HepG2 (cell line): ENCODE measurements at regions of chr1 and their contacts with region 1.

Region 1: DNA sequence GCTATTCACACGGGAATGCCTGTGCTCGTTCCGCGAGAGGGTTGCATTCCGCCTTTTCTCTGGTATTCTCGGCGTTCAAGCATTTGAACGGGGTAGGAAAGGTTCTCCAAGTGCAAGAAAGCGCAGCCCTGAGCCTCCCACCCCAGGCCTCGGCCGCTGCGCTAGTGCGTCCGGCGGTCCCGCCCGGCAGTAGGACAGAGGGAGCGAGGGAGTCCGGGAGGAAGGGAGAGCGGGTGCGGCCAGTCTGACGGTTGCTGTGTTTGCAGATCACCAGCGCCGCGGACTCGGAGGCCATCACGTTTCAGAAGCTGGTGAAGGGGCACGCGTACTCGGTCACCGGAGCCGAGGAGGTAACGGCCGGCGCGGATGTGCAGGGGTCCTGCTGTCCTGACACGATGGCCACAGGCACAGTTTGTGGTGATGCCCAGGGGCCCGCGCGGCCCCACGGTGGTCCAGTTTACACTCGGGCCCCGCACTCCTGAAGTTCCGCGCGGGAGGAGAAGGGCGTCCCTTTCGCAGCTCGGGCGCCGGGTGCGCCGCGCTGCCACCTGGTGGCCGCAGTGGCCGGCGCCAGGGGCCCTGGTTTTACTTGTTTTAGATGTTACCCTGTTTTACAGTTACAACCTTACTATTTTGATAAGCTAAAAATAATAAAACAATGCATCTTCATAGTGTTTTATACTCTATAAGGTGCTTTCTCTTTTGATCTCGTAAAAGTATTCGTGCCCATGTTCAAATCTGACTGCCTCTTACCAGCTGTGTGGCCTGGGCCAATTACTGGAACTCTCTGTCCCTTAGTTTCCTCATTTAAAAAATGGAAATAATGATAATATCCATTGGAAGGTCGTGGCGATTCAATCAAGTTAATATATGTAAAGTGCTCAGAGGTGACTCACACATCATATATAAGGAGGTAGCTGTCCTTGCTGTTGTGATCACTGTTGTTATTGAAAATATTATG is 36.7 kb downstream of the CAPN2 start:
- DNase-seq: no peak
- ATAC-seq: peak; percentile 78
- H3K4me3 ChIP-seq: peak overlapping the region in 1 of 3 experiments; percentile 57; a peak in 1 of 6 replicates
- H3K27ac ChIP-seq: no peak overlapping the region
- H3K4me1 ChIP-seq: peaks cover 17% of the 10 kb centered on the region
- H3K27me3 ChIP-seq: 0 out of 5 replicates have a peak, but pooled peaks cover 0 to 2% of the 10 kb centered on the region in 2 experiments
- CTCF ChIP-seq: peak; percentile 80
- EP300 ChIP-seq: no peak
- POLR2A ChIP-seq: no peak
- RAD21 ChIP-seq: peak; percentile 79

Region 2: DNA sequence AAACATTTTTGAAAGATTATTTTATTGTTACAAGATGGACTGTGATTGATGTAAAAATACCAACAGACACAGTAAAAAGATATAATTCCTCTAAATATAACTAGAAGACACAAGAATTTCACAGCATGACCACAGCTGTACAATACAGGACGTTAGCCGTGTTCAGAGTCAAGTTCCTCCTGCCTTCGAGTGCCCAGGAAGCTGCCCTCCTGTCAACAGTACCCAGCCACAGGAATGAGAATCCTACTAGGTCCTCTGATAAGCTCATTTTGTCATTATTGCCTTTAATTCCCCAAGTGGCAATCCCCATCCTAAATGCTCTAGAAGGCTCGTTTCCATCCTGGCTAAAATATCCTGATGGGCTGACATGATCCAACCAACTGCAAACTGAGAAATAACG is 53.1 kb before region 1 on chr1:
- CTCF ChIA-PET with region 1: interaction called, 49 read pairs
- POLR2A ChIA-PET with region 1: no interaction called
- in situ Hi-C with region 1: loop called (anchors 5 kb)
- intact Hi-C with region 1: loop called (anchors 1 kb)
- DNase-seq: no peak
- ATAC-seq: no peak
- H3K4me3 ChIP-seq: no peak overlapping the region
- H3K27ac ChIP-seq: no peak overlapping the region
- H3K4me1 ChIP-seq: no peaks in the 10 kb centered on the region
- H3K27me3 ChIP-seq: peaks cover 0 to 17% of the 10 kb centered on the region in 2 experiments; a peak in 2 of 5 replicates
- CTCF ChIP-seq: no peak
- EP300 ChIP-seq: no peak
- POLR2A ChIP-seq: no peak
- RAD21 ChIP-seq: no peak

Region 3: GRCh38 chr1:223700942-223701637 is 48.0 kb before region 1 on chr1:
- CTCF ChIA-PET with region 1: interaction called, 49 read pairs
- POLR2A ChIA-PET with region 1: no interaction called
- in situ Hi-C with region 1: loop called (anchors 5 kb)
- intact Hi-C with region 1: loop called (anchors 1 kb)
- DNase-seq: peak; percentile 32
- ATAC-seq: peak; percentile 23; the same call in 2 of the 3 replicates
- H3K4me3 ChIP-seq: no peak overlapping the region
- H3K27ac ChIP-seq: no peak overlapping the region
- H3K4me1 ChIP-seq: peaks cover 3% of the 10 kb centered on the region
- H3K27me3 ChIP-seq: peaks cover 0 to 57% of the 10 kb centered on the region in 2 experiments; a peak in 4 of 5 replicates
- CTCF ChIP-seq: no peak
- EP300 ChIP-seq: no peak
- POLR2A ChIP-seq: no peak
- RAD21 ChIP-seq: no peak

Region 4: DNA sequence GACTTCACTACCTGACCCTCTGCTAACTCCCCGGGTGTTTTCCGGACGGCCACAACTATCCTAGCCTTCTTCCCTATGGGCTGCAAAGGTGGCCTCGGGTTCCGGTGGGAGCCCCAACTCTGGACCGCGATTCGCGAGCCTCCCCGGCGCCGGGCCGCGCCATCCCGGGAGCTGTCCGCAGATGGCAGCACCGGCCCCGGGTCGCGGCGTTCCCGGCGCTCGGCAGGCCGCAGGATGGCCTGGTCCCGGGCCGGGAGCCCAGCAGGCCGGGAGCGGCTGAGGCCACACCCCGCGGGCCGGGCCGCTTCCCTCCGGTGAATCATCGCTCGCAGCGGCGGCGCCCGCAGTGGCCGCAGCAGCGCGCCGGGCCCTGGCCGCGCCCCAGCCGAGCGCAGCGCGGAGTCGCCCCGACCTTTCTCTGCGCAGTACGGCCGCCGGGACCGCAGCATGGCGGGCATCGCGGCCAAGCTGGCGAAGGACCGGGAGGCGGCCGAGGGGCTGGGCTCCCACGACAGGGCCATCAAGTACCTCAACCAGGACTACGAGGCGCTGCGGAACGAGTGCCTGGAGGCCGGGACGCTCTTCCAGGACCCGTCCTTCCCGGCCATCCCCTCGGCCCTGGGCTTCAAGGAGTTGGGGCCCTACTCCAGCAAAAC is 36.7 kb before region 1 on chr1 and contains the start of gene CAPN2:
- CTCF ChIA-PET with region 1: interaction called, 12 read pairs
- POLR2A ChIA-PET with region 1: interaction called, 4 read pairs
- in situ Hi-C with region 1: no loop called
- intact Hi-C with region 1: loop called (anchors 5 kb)
- DNase-seq: no peak
- ATAC-seq: peak; percentile 92
- H3K4me3 ChIP-seq: peak within 1 kb of the TSS; percentile 52 to 81 (median 68)
- H3K27ac ChIP-seq: no peak within 1 kb of the TSS
- H3K4me1 ChIP-seq: peaks cover 66% of the 10 kb centered on the region
- H3K27me3 ChIP-seq: peaks cover 5 to 55% of the 10 kb centered on the region in 2 experiments; a peak in 4 of 5 replicates
- CTCF ChIP-seq: peak; percentile 67
- EP300 ChIP-seq: no peak
- POLR2A ChIP-seq: no peak
- RAD21 ChIP-seq: peak; percentile 89
- total RNA-seq, gene CAPN2: 6.2 and 7.8 TPM in 2 replicates

Region 5: GRCh38 chr1:223771814-223772770 is 23.0 kb after region 1 on chr1:
- CTCF ChIA-PET with region 1: no interaction called
- POLR2A ChIA-PET with region 1: no interaction called
- in situ Hi-C with region 1: no loop called
- intact Hi-C with region 1: no loop called
- DNase-seq: no peak
- ATAC-seq: no peak
- H3K4me3 ChIP-seq: no peak overlapping the region
- H3K27ac ChIP-seq: no peak overlapping the region
- H3K4me1 ChIP-seq: no peaks in the 10 kb centered on the region
- H3K27me3 ChIP-seq: no peaks in the 10 kb centered on the region
- CTCF ChIP-seq: no peak
- EP300 ChIP-seq: no peak
- POLR2A ChIP-seq: no peak
- RAD21 ChIP-seq: no peak